Vagina (tissue), 2 donors: ENCODE measurements at regions of chr3 and their contacts with region 1.

Region 1: GRCh38 chr3:37210230-37210629 is 35.8 kb upstream of the LRRFIP2 start:
- DNase-seq: no peak
- H3K4me3 ChIP-seq: no peak overlapping the region
- H3K27ac ChIP-seq: no peak overlapping the region
- H3K4me1 ChIP-seq: no peaks in the 10 kb centered on the region
- H3K27me3 ChIP-seq: no peaks in the 10 kb centered on the region
- CTCF ChIP-seq: no peak
- POLR2A ChIP-seq: no peak

Region 2: DNA sequence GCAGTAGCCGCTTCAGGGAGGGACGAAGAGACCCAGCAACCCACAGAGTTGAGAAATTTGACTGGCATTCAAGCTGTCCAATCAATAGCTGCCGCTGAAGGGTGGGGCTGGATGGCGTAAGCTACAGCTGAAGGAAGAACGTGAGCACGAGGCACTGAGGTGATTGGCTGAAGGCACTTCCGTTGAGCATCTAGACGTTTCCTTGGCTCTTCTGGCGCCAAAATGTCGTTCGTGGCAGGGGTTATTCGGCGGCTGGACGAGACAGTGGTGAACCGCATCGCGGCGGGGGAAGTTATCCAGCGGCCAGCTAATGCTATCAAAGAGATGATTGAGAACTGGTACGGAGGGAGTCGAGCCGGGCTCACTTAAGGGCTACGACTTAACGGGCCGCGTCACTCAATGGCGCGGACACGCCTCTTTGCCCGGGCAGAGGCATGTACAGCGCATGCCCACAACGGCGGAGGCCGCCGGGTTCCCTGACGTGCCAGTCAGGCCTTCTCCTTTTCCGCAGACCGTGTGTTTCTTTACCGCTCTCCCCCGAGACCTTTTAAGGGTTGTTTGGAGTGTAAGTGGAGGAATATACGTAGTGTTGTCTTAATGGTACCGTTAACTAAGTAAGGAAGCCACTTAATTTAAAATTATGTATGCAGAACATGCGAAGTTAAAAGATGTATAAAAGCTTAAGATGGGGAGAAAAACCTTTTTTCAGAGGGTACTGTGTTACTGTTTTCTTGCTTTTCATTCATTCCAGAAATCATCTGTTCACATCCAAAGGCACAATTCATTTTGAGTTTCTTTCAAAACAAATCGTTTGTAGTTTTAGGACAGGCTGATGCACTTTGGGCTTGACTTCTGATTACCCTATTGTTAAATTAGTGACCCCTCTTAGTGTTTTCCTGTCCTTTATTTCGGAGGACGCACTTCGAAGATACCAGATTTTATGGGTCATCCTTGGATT is 216.6 kb before region 1 on chr3 and contains the start of gene MLH1:
- intact Hi-C with region 1: loop called (anchors 2 kb)
- DNase-seq: no peak
- H3K4me3 ChIP-seq: peak within 1 kb of the TSS; percentile 74 to 83
- H3K27ac ChIP-seq: peak within 1 kb of the TSS; percentile 99
- H3K4me1 ChIP-seq: peaks cover 50% of the 10 kb centered on the region
- H3K27me3 ChIP-seq: no peaks in the 10 kb centered on the region
- CTCF ChIP-seq: no peak
- POLR2A ChIP-seq: peak; percentile 2 to 61
- total RNA-seq, gene MLH1: 61.6 TPM

Region 3: GRCh38 chr3:37024092-37024491 is 186.1 kb before region 1 on chr3:
- intact Hi-C with region 1: loop called (anchors 10 kb)
- DNase-seq: no peak
- H3K4me3 ChIP-seq: no peak overlapping the region
- H3K27ac ChIP-seq: no peak overlapping the region
- H3K4me1 ChIP-seq: no peaks in the 10 kb centered on the region
- H3K27me3 ChIP-seq: no peaks in the 10 kb centered on the region
- CTCF ChIP-seq: peak in 2 of 3 experiments; percentile 13 to 38
- POLR2A ChIP-seq: no peak